ENCODE measurements at regions of chr3 and their contacts with region 1.

Region 1: GRCh38 chr3:119637679-119638525 is 22.5 kb downstream of the POPDC2 start:
- DNase-seq: no peak
- ATAC-seq: peak; percentile 31 to 70

Region 2: DNA sequence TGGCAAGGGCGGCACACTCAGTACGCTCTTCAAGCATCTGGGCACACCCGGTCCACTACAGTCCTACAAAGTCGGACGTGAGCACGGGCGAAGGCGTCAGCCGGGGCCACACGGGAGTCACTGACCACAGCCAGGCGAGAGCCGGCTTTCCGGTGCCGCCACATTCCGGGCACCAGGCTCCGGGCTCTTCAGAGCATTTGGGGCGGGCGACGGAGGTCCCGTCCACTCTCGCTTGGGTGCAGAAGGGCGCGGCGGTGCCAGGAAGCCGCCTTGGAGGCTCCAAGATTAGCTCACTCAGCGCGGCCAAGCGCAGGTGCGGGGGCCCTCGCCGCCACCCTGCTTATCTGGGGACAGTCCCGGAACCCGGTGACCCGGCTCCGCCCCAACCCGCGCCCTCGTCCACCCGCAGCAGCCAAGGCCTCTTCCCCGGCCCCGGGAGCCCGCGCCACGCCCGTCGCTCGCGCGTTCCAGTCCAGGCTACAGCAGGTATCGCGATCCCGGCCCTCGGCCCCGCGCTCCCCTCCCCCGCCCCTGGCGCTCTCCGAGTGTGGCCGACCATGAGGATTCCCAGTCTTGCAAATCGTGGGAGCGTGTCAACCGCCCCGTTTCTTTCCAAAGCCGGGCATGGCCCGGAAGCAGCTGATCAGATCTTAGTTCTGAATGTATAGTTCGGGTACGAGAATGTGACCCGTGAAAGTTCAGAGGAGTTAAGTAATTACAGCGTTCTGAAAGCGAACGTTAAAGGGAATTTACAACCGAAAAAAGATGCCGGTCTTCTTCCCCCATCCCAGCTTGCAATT is 58.3 kb before region 1 on chr3 and contains the start of gene ADPRH:
- intact Hi-C with region 1: loop called in 1 of 2 experiments (anchors 2 kb)
- DNase-seq: peak; percentile 89
- ATAC-seq: peak; percentile 96 to 97
- total RNA-seq, gene ADPRH: 9.4 to 10.8 TPM

Region 3: DNA sequence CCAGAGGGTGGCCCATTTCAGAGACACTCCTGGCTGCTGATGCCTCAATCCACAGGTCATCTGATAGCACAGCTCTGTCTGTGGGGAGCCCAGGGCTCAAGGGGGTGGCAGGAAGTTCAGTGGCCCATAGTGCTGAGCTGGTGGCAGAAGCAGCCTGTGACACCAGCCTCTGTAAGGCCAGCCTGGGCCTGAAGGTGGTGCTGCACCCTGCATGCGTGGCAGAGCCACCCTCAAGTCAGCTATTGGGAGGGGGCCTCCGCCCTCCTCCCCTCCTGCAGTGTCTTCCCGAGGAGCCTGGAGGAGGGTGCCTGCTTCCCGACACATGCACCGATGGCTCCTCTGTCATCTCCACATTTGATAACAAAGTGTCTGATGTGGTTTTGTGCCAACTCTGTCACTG is 37.2 kb before region 1 on chr3:
- intact Hi-C with region 1: loop called in 1 of 2 experiments (anchors 5 kb)
- DNase-seq: peak; percentile 33
- ATAC-seq: peak; percentile 86 to 88

Region 4: GRCh38 chr3:119669906-119670570 is 32.1 kb after region 1 on chr3:
- intact Hi-C with region 1: loop called in 1 of 2 experiments (anchors 5 kb)
- DNase-seq: no peak
- ATAC-seq: peak in 1 of 2 donors; percentile 41